Activated naive CD4-positive, alpha-beta T cell treated with anti-CD3 and anti-CD28 coated beads for 36 hours (primary cell): ENCODE measurements at regions of chr9 and their contacts with region 1.

Region 1: GRCh38 chr9:2014696-2015580 is at the start of gene SMARCA2:
- DNase-seq: peak; percentile 97
- H3K4me3 Mint-ChIP-seq: peak within 1 kb of the TSS; percentile 92
- H3K27ac Mint-ChIP-seq: peak within 1 kb of the TSS; percentile 99
- H3K4me1 Mint-ChIP-seq: peaks cover 44% of the 10 kb centered on the region
- H3K27me3 Mint-ChIP-seq: no peaks in the 10 kb centered on the region
- total RNA-seq, gene SMARCA2: 87.8 to 89.9 TPM

Region 2: GRCh38 chr9:1042466-1042865 is 972.5 kb before region 1 on chr9:
- CTCF ChIA-PET with region 1: no interaction called
- intact Hi-C with region 1: loop called (anchors 10 kb)
- DNase-seq: peak; percentile 54
- H3K4me3 Mint-ChIP-seq: peak overlapping the region; percentile 50
- H3K27ac Mint-ChIP-seq: no peak overlapping the region
- H3K4me1 Mint-ChIP-seq: peaks cover 31% of the 10 kb centered on the region
- H3K27me3 Mint-ChIP-seq: peaks cover 72% of the 10 kb centered on the region

Region 3: DNA sequence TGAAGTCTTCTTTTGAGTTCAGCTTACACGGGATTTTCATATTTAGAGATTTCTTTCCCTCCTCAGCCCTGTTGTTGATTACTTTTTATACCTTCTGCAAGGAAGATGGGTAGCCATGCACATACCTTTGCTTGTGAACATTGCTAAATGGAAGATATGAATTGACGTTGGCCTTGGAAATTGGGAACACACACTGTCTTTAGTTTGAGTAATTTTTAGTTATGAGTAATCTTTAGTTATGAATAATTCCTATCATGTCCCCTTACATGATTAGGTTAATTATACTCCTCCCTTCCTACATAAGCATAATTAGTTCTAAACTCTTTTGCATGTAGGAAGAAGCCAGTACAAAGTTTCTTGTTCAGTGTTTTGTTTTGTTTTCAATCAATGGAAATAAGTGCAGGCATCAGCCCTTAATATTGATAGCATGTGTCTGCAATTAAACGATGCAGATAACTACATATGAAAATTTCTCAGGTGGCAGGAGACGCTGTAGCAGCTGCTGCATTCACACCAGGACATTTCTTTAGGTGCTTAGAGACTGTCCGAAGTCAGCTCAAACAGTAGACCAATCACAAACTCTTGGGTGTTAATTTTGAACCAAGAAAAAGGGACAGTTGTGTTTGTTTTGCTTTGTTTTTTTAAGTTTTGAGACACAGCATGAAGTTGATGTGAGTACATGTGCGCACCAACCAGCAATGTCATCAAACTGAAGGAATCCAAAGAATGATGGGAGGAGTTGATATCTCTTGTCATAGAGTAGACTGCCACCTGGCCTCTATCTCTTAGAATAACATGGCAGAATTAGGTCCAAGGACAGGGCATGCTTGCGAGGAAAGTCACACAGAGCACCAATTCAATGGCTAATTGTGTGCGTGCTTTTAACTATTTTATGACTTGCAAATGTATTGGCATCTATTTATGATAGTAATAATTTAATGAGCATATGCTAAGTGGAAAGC is 51.7 kb after region 1 on chr9:
- CTCF ChIA-PET with region 1: interaction called, 3 read pairs
- intact Hi-C with region 1: loop called (anchors 1 kb)
- DNase-seq: no peak
- H3K4me3 Mint-ChIP-seq: no peak overlapping the region
- H3K27ac Mint-ChIP-seq: no peak overlapping the region
- H3K4me1 Mint-ChIP-seq: peaks cover 13% of the 10 kb centered on the region
- H3K27me3 Mint-ChIP-seq: no peaks in the 10 kb centered on the region

Region 4: GRCh38 chr9:2125906-2126305 is 111.0 kb after region 1 on chr9:
- CTCF ChIA-PET with region 1: no interaction called
- intact Hi-C with region 1: loop called (anchors 2 kb)
- DNase-seq: no peak
- H3K4me3 Mint-ChIP-seq: peak overlapping the region; percentile 46
- H3K27ac Mint-ChIP-seq: peak overlapping the region; percentile 85
- H3K4me1 Mint-ChIP-seq: peaks cover 31% of the 10 kb centered on the region
- H3K27me3 Mint-ChIP-seq: no peaks in the 10 kb centered on the region

Region 5: GRCh38 chr9:2620919-2621679 is 606.2 kb after region 1 on chr9:
- CTCF ChIA-PET with region 1: no interaction called
- intact Hi-C with region 1: loop called (anchors 1 kb)
- DNase-seq: peak; percentile 89
- H3K4me3 Mint-ChIP-seq: peak overlapping the region; percentile 78
- H3K27ac Mint-ChIP-seq: peak overlapping the region; percentile 65
- H3K4me1 Mint-ChIP-seq: peaks cover 12% of the 10 kb centered on the region
- H3K27me3 Mint-ChIP-seq: peaks cover 62% of the 10 kb centered on the region